ENCODE measurements at regions of chr5 and their contacts with region 1.

Region 1: DNA sequence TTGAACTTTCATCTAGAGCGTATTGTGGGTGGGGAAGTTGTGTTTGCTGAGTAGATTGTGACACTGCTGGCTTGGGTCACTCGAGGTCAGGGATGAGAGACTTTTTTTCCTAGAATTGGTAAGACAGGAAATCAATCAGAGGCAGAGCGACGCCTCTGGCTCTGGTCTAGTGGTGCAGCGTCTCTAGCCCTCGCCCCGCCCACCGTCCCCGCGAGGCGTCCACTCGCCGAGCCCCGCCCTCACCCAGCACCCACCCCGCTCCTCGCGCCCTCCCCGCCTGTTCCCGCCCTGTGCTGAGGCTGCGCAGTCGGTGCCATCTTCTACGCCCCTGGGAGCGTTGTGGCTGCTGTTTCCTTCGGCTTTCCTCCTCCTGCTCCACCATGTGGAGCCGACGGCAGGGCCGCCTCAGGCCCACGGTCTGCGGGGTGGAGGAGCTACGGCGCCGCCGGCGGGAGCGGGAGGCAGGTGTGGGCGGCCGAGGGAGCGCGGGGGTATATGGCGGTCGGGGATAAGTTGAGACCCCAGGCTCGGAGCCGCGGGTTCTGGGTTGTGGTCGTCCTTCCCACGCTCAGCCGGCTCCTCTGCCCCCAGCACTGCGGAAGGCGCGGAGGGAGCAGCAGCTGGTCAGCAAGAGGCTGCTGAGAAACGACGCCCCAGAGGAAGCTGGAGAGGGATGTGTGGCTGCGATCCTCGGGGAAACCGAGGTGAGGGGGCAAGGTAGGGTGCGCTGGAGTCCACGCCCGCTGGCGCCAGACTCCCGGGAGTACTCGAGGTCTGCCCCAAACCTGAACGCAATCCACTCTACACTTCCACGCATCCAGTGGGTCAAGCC is at the start of gene TMCO6:
- DNase-seq: peak; percentile 94 to 98 (median 97)
- ATAC-seq: peak; percentile 99
- H3K4me3 ChIP-seq: peak within 1 kb of the TSS; percentile 91 to 95
- H3K4me3 Mint-ChIP-seq: peak within 1 kb of the TSS; percentile 92
- H3K27ac ChIP-seq: peak within 1 kb of the TSS; percentile 72 to 93
- H3K27ac Mint-ChIP-seq: peak within 1 kb of the TSS; percentile 93
- H3K4me1 ChIP-seq: peaks cover 9% of the 10 kb centered on the region
- H3K4me1 Mint-ChIP-seq: peaks cover 30% of the 10 kb centered on the region
- H3K27me3 ChIP-seq: no peaks in the 10 kb centered on the region
- H3K27me3 Mint-ChIP-seq: no peaks in the 10 kb centered on the region
- CTCF ChIP-seq: peak; percentile 70
- total RNA-seq, gene TMCO6: 16.7 to 20.6 TPM

Region 2: GRCh38 chr5:140302786-140303639 is 336.4 kb before region 1 on chr5 and contains the start of gene PFDN1:
- CTCF ChIA-PET with region 1: no interaction called
- POLR2A ChIA-PET with region 1: no interaction called
- intact Hi-C with region 1: loop called in 1 of 2 experiments (anchors 10 kb)
- DNase-seq: peak; percentile 77 to 97 (median 90)
- ATAC-seq: peak; percentile 100
- H3K4me3 ChIP-seq: peak within 1 kb of the TSS; percentile 73 to 87
- H3K4me3 Mint-ChIP-seq: peak within 1 kb of the TSS; percentile 99
- H3K27ac ChIP-seq: peak within 1 kb of the TSS; percentile 61 to 82
- H3K27ac Mint-ChIP-seq: peak within 1 kb of the TSS; percentile 98
- H3K4me1 ChIP-seq: peaks cover 14% of the 10 kb centered on the region
- H3K4me1 Mint-ChIP-seq: peaks cover 29% of the 10 kb centered on the region
- H3K27me3 ChIP-seq: no peaks in the 10 kb centered on the region
- H3K27me3 Mint-ChIP-seq: peaks cover 4% of the 10 kb centered on the region
- CTCF ChIP-seq: no peak
- total RNA-seq, gene PFDN1: 28.4 to 30.5 TPM

Region 3: GRCh38 chr5:140547508-140548299 is 91.7 kb before region 1 on chr5 and contains the start of gene EIF4EBP3:
- CTCF ChIA-PET with region 1: interaction called, 16 read pairs
- POLR2A ChIA-PET with region 1: interaction called, 9 read pairs
- intact Hi-C with region 1: loop called in 1 of 2 experiments (anchors 1 kb)
- DNase-seq: peak; percentile 74 to 94 (median 88)
- ATAC-seq: peak; percentile 97
- H3K4me3 ChIP-seq: peak within 1 kb of the TSS; percentile 69 to 96
- H3K4me3 Mint-ChIP-seq: peak within 1 kb of the TSS; percentile 90
- H3K27ac ChIP-seq: peak within 1 kb of the TSS; percentile 88 to 96
- H3K27ac Mint-ChIP-seq: peak within 1 kb of the TSS; percentile 98
- H3K4me1 ChIP-seq: peaks cover 21% of the 10 kb centered on the region
- H3K4me1 Mint-ChIP-seq: peaks cover 31% of the 10 kb centered on the region
- H3K27me3 ChIP-seq: no peaks in the 10 kb centered on the region
- H3K27me3 Mint-ChIP-seq: no peaks in the 10 kb centered on the region
- CTCF ChIP-seq: peak; percentile 72
- total RNA-seq, gene EIF4EBP3: 10.6 to 13.7 TPM

Region 4: DNA sequence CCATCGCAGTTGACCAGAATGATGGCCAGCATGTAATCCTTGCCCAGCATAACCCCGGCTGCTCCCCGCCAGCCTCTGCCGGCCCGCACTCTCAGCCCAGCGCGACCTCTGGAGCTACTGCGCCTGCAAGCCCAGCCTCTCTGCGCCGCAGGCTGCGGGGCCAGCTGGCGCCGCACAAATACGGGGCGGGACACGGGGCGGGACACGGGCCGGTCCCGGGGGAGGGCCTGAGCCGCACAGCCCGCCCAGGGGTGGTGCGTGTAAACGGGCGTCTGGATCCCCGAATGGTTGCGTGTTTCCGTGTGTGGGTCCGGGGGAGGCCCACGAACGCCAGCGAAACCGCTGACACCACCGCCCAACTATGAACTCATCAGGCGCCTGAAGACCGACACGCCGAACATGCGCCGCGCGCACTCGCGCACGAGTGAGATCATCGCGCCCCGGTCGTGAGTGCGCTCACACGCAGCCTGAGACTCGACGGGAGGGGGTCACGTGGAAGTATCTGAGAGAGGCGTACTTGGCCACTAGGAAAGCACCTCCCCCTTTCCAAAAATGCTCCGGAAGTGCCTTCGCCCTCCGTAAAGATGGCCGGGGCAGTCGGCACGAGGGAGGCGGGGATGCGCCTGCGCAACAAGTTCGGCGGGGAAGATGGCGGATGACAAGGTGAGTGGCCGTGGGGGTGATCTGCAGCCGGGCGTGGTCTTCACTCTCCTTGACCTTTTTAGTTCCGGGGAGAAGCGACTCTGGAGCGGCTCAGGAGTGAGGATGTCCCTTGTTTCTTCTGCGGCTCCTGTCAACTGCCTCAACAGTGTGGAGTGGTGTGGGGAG is 75.0 kb before region 1 on chr5 and contains the starts of genes APBB3 and SLC35A4:
- CTCF ChIA-PET with region 1: interaction called, 3 read pairs
- POLR2A ChIA-PET with region 1: no interaction called
- intact Hi-C with region 1: loop called (anchors 1 to 2 kb)
- DNase-seq: peak; percentile 92 to 100 (median 95)
- ATAC-seq: peak; percentile 88
- H3K4me3 ChIP-seq: peak within 1 kb of the TSS; percentile 52 to 79
- H3K4me3 Mint-ChIP-seq: peak within 1 kb of the TSS; percentile 88
- H3K27ac ChIP-seq: peak within 1 kb of the TSS; percentile 73 to 92
- H3K27ac Mint-ChIP-seq: peak within 1 kb of the TSS; percentile 94
- H3K4me1 ChIP-seq: peaks cover 30% of the 10 kb centered on the region
- H3K4me1 Mint-ChIP-seq: peaks cover 62% of the 10 kb centered on the region
- H3K27me3 ChIP-seq: no peaks in the 10 kb centered on the region
- H3K27me3 Mint-ChIP-seq: no peaks in the 10 kb centered on the region
- CTCF ChIP-seq: no peak
- total RNA-seq, gene APBB3: 51.0 to 51.7 TPM
- total RNA-seq, gene SLC35A4: 14.8 to 19.4 TPM

Region 5: DNA sequence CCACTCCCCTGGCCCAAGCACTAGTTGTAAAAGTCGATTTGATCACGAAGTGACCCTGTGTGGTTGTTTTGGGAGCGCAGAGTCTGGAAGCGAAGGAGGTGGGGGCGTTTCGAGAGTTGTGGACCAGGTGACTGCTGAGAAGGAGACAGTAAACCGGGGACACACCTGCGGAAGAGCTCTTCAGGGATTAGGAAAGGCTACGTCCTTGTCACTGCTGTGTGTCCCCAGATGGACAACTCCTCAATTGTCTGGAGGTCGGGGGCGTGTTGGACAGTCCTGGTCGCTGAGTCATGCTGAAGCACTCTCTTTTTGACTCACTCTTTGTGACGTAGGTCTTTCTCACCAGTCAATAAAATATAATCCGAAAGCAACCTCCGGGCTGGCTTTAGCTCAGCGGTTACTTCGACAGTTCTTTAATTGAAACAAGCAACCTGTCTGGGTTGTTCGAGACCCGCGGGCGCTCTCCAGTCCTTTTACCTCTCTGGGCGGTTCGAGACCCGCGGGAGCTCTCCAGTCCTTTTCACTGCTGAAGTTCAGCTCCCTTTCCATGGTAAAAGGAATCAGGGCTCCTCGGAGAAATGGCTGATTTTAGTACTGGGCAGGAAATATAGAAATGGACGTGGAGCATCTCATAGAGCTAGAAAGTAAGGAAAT is 71.7 kb after region 1 on chr5:
- CTCF ChIA-PET with region 1: interaction called, 4 read pairs
- POLR2A ChIA-PET with region 1: interaction called, 8 read pairs
- intact Hi-C with region 1: loop called (anchors 1 to 2 kb)
- DNase-seq: peak; percentile 66 to 95 (median 85)
- ATAC-seq: peak; percentile 83
- H3K4me3 ChIP-seq: peak overlapping the region; percentile 58 to 74
- H3K4me3 Mint-ChIP-seq: peak overlapping the region; percentile 99
- H3K27ac ChIP-seq: peak overlapping the region; percentile 72 to 86
- H3K27ac Mint-ChIP-seq: peak overlapping the region; percentile 99
- H3K4me1 ChIP-seq: no peaks in the 10 kb centered on the region
- H3K4me1 Mint-ChIP-seq: peaks cover 16% of the 10 kb centered on the region
- H3K27me3 ChIP-seq: no peaks in the 10 kb centered on the region
- H3K27me3 Mint-ChIP-seq: no peaks in the 10 kb centered on the region
- CTCF ChIP-seq: no peak

Measured in CD8-positive, alpha-beta T cell (primary cell).